ENCODE measurements at regions of chr7 and their contacts with region 1.

Region 1: DNA sequence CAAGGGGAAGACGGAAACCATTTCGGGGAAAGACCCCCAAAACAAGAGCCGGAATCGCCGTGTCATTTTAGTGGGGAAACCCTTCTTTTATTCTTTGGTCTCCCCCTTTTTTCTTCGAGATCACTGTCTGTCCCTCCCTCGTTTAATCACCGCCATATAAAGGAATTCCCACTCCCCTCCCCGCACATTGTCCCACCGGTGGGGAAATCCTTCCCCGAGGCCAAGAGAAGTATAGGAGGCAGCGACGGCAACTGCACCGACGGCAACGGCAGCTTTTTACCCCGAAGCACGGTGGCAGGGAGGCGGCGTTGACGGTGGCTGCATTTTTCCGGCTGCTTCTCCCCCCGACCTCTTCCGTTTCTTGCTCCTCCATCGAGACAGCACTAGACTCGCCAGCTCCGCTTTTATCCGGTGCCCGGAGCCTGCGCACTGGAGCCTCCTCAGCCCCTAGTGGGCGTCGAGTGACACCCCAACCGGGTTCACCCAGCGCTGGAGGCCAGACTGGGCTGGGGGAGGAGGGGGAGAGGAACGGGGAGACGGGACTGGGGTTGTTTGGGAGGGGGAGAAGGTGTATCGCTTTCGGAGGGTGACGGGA is 687 bp upstream of the KMT2E start:
- DNase-seq: peak; percentile 94
- ATAC-seq: peak; percentile 63
- H3K4me3 Mint-ChIP-seq: peak overlapping the region; percentile 99
- H3K27ac Mint-ChIP-seq: peak overlapping the region; percentile 99
- H3K4me1 Mint-ChIP-seq: peaks cover 34% of the 10 kb centered on the region
- H3K27me3 Mint-ChIP-seq: peaks cover 2% of the 10 kb centered on the region

Region 2: DNA sequence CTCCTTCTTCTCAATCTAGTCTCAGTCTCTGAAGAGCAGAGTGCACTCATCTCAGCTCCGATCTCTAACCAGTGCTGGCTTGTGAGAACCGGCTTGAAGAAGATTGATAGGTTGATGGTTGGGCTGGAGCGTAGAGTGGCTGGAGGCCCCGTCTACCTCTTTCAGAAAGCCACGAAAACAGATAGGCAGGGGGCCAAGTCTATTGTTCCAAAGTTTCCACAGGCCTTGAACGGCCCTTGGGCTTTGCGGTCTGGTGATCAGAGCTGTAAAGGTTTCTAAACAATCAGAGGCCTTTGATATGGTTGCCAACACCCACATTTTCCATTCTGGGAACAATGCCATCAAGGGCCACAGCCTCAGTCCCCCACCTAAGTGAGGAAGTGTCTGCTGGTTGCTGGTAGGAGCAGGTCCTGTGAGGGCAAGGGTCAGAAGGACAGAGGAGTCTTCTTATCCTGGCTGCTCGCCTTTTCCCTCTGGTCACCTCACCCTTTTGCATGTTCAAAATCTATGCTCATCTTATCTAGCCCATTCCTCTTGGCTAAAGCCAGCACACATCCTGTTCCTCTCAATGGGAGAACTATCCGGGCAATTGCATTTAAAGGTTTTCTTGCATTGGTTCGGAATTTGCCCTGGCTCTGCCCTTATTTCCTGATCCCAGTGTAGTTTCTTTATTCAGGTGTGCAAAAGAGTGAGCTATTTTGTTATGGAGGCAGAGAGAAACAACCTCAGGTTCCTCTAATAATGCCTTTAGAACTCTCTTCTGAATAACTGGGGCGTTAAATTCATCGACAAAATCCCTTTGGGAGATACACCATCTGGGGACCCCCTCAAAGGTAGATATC is 69.6 kb before region 1 on chr7:
- CTCF ChIA-PET with region 1: interaction called, 5 read pairs
- POLR2A ChIA-PET with region 1: interaction called, 245 read pairs
- DNase-seq: peak; percentile 76
- ATAC-seq: peak; percentile 51
- H3K4me3 Mint-ChIP-seq: peak overlapping the region; percentile 83
- H3K27ac Mint-ChIP-seq: peak overlapping the region; percentile 100
- H3K4me1 Mint-ChIP-seq: peaks cover 70% of the 10 kb centered on the region
- H3K27me3 Mint-ChIP-seq: no peaks in the 10 kb centered on the region

Region 3: GRCh38 chr7:104956753-104957450 is 56.4 kb before region 1 on chr7:
- CTCF ChIA-PET with region 1: interaction called, 5 read pairs
- POLR2A ChIA-PET with region 1: interaction called, 39 read pairs
- DNase-seq: peak; percentile 69
- ATAC-seq: peak; percentile 86
- H3K4me3 Mint-ChIP-seq: peak overlapping the region; percentile 34
- H3K27ac Mint-ChIP-seq: peak overlapping the region; percentile 89
- H3K4me1 Mint-ChIP-seq: peaks cover 41% of the 10 kb centered on the region
- H3K27me3 Mint-ChIP-seq: no peaks in the 10 kb centered on the region

Region 4: GRCh38 chr7:105003275-105003674 is 10.0 kb before region 1 on chr7:
- CTCF ChIA-PET with region 1: interaction called, 10 read pairs
- POLR2A ChIA-PET with region 1: interaction called, 14 read pairs
- DNase-seq: no peak
- ATAC-seq: peak; percentile 58
- H3K4me3 Mint-ChIP-seq: peak overlapping the region; percentile 54
- H3K27ac Mint-ChIP-seq: peak overlapping the region; percentile 68
- H3K4me1 Mint-ChIP-seq: peaks cover 63% of the 10 kb centered on the region
- H3K27me3 Mint-ChIP-seq: no peaks in the 10 kb centered on the region

Region 5: DNA sequence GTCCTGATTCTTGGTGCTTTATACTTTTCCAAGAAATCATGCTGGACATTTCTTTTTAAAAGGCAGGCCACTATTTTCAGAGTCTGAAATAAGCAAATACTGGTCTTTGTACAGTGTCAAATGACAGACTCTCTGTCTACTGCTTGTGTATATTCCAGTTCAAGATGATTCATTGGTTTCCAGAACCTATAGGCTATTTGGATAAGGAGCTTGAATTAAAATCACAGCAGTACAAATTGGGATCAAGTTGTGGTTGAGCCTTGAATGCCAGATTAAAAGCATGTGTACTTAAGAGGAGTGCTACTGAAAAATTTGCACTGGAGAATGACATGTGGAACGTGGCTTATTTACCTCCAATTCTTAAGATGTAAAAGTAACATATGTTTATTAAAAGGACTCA is 11.4 kb after region 1 on chr7:
- CTCF ChIA-PET with region 1: interaction called, 5 read pairs
- POLR2A ChIA-PET with region 1: interaction called, 10 read pairs
- DNase-seq: no peak
- ATAC-seq: peak; percentile 16
- H3K4me3 Mint-ChIP-seq: no peak overlapping the region
- H3K27ac Mint-ChIP-seq: no peak overlapping the region
- H3K4me1 Mint-ChIP-seq: peaks cover 72% of the 10 kb centered on the region
- H3K27me3 Mint-ChIP-seq: no peaks in the 10 kb centered on the region

Region 6: DNA sequence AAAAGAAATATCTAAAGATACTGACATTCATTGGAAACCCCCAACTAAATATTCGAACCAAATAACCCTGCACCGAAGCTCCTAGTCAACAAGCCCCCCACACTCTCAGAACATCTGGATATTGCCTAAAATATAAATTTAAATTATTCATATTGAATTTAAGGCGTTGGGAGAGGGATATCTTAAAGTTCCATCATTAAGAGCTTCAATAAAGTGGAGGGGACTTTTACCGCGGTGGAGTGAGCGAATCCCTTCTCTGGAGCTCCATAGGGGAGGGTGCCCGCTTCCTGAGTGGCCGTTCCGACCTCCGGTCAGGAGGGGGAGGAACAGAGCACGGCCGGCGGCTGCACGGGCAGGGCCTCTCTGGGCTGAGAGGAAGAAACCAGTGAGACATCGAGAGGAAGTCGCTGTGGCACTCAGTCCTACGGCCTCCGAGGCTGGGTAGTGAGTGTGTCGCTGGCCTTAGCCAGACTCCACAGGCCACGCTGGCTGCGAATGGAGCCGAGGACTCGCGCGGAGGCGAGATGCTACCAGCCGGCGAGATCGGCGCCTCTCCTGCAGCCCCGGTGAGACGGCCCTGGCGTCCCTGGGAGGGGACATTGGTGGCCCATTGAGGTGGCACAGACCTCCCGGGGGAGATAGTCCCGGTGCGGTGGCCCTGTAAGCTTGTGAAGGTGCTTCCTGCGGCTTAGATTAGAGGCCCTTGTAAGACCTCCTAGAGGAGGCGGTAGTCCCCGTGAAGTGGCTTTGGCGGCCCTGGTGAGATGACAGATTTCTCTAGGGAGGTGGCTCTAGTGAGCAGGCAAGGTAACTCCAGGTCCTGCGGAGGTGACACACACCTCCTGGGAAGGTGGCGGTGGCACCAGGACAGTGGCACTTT is 518.7 kb after region 1 on chr7 and contains the start of gene RINT1:
- CTCF ChIA-PET with region 1: interaction called, 7 read pairs
- POLR2A ChIA-PET with region 1: interaction called, 10 read pairs
- DNase-seq: peak; percentile 93
- ATAC-seq: peak; percentile 93
- H3K4me3 Mint-ChIP-seq: peak within 1 kb of the TSS; percentile 78
- H3K27ac Mint-ChIP-seq: peak within 1 kb of the TSS; percentile 91
- H3K4me1 Mint-ChIP-seq: peaks cover 24% of the 10 kb centered on the region
- H3K27me3 Mint-ChIP-seq: no peaks in the 10 kb centered on the region
- total RNA-seq, gene RINT1: 21.1 to 21.9 TPM